ENCODE measurements at regions of chr20 and their contacts with region 1.

Region 1: DNA sequence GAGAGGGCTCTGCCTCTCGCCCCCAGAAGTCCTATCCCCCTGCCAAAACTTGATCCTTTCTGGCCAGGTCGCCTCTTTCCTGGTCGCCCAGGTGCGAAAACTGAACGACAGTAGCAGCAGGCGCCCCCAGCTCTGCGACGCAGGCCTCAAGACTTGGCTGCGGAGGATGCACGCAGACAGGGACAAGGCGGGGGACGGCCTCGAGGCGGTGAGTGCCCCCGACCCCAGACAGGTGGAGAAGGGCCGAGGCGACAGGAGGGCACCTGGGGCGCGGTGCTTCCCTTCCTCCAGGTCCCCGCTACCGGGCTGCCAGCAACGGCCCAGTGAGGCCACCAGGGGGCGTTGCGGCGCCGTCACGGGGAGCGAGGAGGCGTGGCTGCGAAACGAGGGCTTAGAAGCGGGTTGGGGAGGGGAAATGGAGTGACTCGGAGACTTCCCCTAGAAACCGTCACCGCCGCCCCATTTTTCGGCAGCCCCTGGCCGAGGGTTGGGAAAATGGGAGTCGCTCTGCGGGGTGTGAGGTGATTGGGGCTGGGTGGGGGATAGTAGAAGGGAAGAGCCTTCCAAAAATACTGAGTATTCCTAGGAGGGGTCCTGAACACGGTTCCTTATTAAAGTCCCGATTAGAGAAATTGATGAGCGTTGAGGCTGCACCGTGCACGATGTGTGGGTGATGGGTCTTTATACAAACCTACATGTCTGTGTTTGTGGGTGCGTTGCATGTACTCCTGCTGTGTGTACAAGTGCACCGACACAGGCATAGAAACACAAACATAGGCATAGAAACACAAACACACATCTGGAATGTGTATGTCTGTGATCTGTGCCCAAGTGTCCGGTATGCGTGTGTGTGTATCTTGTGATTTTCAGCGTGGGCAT is 44.6 kb downstream of the ARHGAP40 start:
- DNase-seq: peak; percentile 91
- H3K4me3 Mint-ChIP-seq: peak overlapping the region; percentile 53
- H3K27ac Mint-ChIP-seq: no peak overlapping the region
- H3K4me1 Mint-ChIP-seq: peaks cover 11% of the 10 kb centered on the region
- H3K27me3 Mint-ChIP-seq: peaks cover 26% of the 10 kb centered on the region

Region 2: GRCh38 chr20:38590676-38591471 is 55.3 kb before region 1 on chr20:
- CTCF ChIA-PET with region 1: no interaction called
- intact Hi-C with region 1: no loop called
- DNase-seq: no peak
- H3K4me3 Mint-ChIP-seq: no peak overlapping the region
- H3K27ac Mint-ChIP-seq: no peak overlapping the region
- H3K4me1 Mint-ChIP-seq: no peaks in the 10 kb centered on the region
- H3K27me3 Mint-ChIP-seq: no peaks in the 10 kb centered on the region

Region 3: GRCh38 chr20:38633577-38634093 is 12.6 kb before region 1 on chr20:
- CTCF ChIA-PET with region 1: interaction called, 12 read pairs
- intact Hi-C with region 1: no loop called
- DNase-seq: peak; percentile 73
- H3K4me3 Mint-ChIP-seq: no peak overlapping the region
- H3K27ac Mint-ChIP-seq: no peak overlapping the region
- H3K4me1 Mint-ChIP-seq: peaks cover 2% of the 10 kb centered on the region
- H3K27me3 Mint-ChIP-seq: peaks cover 15% of the 10 kb centered on the region

Region 4: GRCh38 chr20:38730989-38731737 is 84.9 kb after region 1 on chr20:
- CTCF ChIA-PET with region 1: interaction called, 8 read pairs
- intact Hi-C with region 1: loop called (anchors 1 kb)
- DNase-seq: peak; percentile 85
- H3K4me3 Mint-ChIP-seq: peak overlapping the region; percentile 61
- H3K27ac Mint-ChIP-seq: no peak overlapping the region
- H3K4me1 Mint-ChIP-seq: peaks cover 39% of the 10 kb centered on the region
- H3K27me3 Mint-ChIP-seq: peaks cover 85% of the 10 kb centered on the region

Region 5: DNA sequence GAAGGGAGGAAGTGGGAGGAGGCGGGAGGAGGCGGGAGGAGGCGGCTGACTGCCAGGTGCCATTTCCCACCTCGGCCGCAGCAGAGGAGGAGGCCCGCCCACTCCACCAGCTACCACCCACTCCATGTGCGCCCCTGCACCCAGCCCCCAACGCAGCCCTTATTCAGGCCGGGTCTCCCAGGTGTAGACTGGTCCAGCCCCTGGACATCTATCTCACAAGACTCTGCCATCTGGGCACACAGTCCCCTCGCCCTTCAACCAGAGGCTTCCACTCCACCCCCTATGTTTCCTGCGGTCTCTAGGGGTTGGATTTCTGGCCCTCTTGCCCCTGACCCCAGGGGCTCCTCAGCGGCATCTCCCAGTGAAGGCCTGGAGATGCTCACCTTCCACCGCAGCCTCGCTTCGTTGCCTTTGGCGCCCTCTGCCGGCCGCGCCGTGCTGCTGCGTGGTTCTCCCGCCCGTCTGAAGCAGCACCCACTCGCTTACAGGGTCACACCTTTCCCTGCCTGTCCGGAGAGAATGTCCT is 247.4 kb after region 1 on chr20:
- CTCF ChIA-PET with region 1: interaction called, 8 read pairs
- intact Hi-C with region 1: loop called (anchors 1 kb)
- DNase-seq: peak; percentile 85
- H3K4me3 Mint-ChIP-seq: no peak overlapping the region
- H3K27ac Mint-ChIP-seq: peak overlapping the region; percentile 42
- H3K4me1 Mint-ChIP-seq: peaks cover 33% of the 10 kb centered on the region
- H3K27me3 Mint-ChIP-seq: no peaks in the 10 kb centered on the region

Region 6: GRCh38 chr20:38962044-38962927 is 316.1 kb after region 1 on chr20 and contains the start of gene DHX35:
- CTCF ChIA-PET with region 1: no interaction called
- intact Hi-C with region 1: loop called (anchors 1 kb)
- DNase-seq: peak; percentile 99
- H3K4me3 Mint-ChIP-seq: peak within 1 kb of the TSS; percentile 95
- H3K27ac Mint-ChIP-seq: peak within 1 kb of the TSS; percentile 98
- H3K4me1 Mint-ChIP-seq: peaks cover 32% of the 10 kb centered on the region
- H3K27me3 Mint-ChIP-seq: no peaks in the 10 kb centered on the region
- total RNA-seq, gene DHX35: 9.5 to 10.3 TPM

Region 7: DNA sequence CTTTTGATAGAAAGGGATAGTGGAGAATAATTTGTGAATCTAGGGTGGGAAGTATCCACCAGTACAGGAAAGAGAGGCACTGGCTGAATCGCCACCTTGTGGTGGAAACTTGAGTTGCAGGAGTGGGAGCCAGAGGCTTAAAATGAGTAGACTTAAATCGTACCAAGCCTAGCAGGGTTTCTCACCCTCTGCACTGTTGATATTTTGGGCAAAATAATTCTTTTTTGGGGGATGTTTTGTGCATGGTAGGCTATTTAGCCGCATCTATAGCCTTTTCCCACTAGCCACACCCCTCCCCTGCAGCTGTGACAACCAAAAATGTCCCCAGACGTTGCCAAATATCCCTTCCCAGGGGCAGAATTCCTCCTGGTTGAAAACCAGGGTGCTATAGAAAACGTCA is 435.0 kb after region 1 on chr20:
- CTCF ChIA-PET with region 1: interaction called, 3 read pairs
- intact Hi-C with region 1: loop called (anchors 1 kb)
- DNase-seq: peak; percentile 90
- H3K4me3 Mint-ChIP-seq: no peak overlapping the region
- H3K27ac Mint-ChIP-seq: no peak overlapping the region
- H3K4me1 Mint-ChIP-seq: no peaks in the 10 kb centered on the region
- H3K27me3 Mint-ChIP-seq: peaks cover 18% of the 10 kb centered on the region

Measured in activated naive CD4-positive, alpha-beta T cell treated with anti-CD3 and anti-CD28 coated beads for 36 hours (primary cell).